Mammary epithelial cell (primary cell): ENCODE measurements at regions of chr3 and their contacts with region 1.

Region 1: DNA sequence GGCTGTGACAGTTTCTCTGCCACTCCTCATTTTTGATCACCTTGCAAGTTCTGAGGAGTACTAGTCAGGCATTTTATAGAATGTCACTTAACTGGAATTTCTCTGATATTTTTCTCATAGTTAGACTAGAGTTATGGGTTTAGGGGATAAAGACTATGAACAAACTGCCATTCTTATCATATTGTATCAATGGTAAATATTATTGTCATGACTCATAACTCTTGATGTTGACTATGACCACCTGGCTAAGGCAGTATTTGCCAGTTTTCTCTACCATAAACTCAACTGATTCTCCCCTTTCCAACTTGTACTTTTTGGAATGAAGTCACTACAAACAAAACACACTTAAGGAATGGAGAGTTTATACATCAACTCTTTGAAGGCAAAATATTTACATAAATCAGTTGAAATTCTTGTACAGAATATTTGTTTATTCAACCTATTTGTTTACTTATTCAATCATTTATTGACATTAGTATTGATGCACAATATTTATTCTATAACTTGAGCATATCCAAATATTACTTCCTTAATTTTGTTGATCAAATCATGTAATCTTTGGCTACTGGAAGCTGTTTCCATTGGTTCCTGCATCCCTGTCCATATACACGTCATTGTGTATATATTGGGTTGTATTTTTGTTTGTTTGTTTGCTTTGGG is 22.6 kb upstream of the OR5K1 start:
- DNase-seq: peak; percentile 22
- H3K4me3 ChIP-seq: no peak overlapping the region
- H3K27ac ChIP-seq: no peak overlapping the region
- H3K4me1 ChIP-seq: peaks cover 4% of the 10 kb centered on the region
- H3K27me3 ChIP-seq: no peaks in the 10 kb centered on the region
- CTCF ChIP-seq: no peak

Region 2: DNA sequence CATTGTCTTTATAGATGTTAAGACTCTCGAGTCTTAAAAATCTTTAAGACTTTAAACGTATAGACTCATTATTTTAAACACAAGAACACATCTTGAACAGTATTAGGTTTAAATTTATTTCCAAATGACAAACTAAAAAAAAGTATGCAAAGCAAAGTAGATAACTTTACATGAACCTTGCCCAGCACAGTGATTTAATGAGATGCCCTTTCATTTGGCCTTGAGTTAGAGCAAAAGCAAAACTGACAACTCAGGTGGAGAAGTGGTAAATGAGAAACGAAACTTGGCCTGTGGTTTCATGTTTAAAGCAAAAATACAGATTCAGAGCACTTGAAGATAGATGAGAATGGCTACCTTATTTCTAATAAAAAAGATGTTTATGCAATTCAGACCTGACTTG is 99.9 kb after region 1 on chr3:
- CTCF ChIA-PET with region 1: no interaction called
- dilution Hi-C with region 1: loop called (anchors 5 kb)
- in situ Hi-C with region 1: no loop called
- intact Hi-C with region 1: no loop called
- DNase-seq: no peak
- H3K4me3 ChIP-seq: no peak overlapping the region
- H3K27ac ChIP-seq: no peak overlapping the region
- H3K4me1 ChIP-seq: no peaks in the 10 kb centered on the region
- H3K27me3 ChIP-seq: no peaks in the 10 kb centered on the region
- CTCF ChIP-seq: no peak

Region 3: GRCh38 chr3:98705706-98706105 is 265.3 kb after region 1 on chr3:
- CTCF ChIA-PET with region 1: no interaction called
- dilution Hi-C with region 1: no loop called
- in situ Hi-C with region 1: no loop called
- intact Hi-C with region 1: no loop called
- DNase-seq: no peak
- H3K4me3 ChIP-seq: no peak overlapping the region
- H3K27ac ChIP-seq: no peak overlapping the region
- H3K4me1 ChIP-seq: no peaks in the 10 kb centered on the region
- H3K27me3 ChIP-seq: no peaks in the 10 kb centered on the region
- CTCF ChIP-seq: peak; percentile 28 to 59